ENCODE measurements at regions of chr6 and their contacts with region 1.

Region 1: GRCh38 chr6:2999618-3000557 is at the start of gene NQO2:
- DNase-seq: peak; percentile 82 to 94 (median 88)
- H3K4me3 ChIP-seq: peak within 1 kb of the TSS; percentile 95
- H3K4me3 Mint-ChIP-seq: peak within 1 kb of the TSS; percentile 89 to 94 (median 92)
- H3K27ac ChIP-seq: peak within 1 kb of the TSS; percentile 83
- H3K27ac Mint-ChIP-seq: peak within 1 kb of the TSS; percentile 80 to 96 (median 92)
- H3K4me1 ChIP-seq: peaks cover 19% of the 10 kb centered on the region
- H3K4me1 Mint-ChIP-seq: peaks cover 28 to 38% (median 35%) of the 10 kb centered on the region in 3 donors
- H3K27me3 ChIP-seq: no peaks in the 10 kb centered on the region
- H3K27me3 Mint-ChIP-seq: peaks cover 0 to 4% of the 10 kb centered on the region in 2 donors
- total RNA-seq, gene NQO2: 15.6 to 18.5 TPM

Region 2: DNA sequence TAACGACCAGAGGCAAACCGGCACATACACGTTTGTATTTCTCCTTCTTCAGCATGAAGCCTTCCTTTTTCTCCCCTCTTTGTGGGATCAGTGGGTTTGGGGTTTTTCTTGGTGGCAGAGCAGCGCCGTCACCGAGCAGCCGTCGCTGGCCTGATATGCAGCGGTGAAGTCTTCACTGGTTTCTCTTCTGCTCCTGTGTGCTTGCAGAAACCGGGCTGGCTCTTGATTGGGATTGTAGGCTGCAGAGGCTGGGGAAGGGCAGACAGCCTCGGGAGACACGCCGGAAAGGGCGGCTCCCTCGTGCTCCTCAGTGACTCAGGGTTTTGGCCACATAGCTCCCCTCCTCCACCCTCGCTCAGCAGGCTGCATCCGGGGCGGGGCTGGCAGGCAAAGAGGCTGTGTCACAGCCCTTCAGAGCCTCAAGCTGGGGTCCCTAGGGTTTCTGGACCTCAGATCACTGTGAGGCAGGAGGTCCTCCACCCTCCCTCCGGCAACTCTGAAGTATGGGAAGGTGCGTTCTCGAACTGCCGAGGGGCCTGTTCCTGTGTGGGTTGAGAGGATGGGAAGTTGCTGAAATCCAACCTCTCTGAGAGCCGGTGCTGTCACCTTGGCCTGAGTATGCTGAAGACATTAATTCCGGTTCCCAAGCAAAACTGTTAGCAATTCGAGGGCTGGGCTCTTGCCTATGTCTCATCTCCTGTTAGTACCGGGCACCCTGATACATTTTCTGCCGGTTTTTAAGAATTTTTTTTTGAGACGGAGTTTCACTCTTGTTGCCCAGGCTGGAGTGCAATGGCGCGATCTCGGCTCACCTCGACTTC is 24.0 kb after region 1 on chr6:
- CTCF ChIA-PET with region 1: interaction called, 13 read pairs
- POLR2A ChIA-PET with region 1: interaction called, 23 read pairs
- DNase-seq: peak; percentile 71 to 89 (median 77)
- H3K4me3 ChIP-seq: peak overlapping the region; percentile 88
- H3K4me3 Mint-ChIP-seq: peak overlapping the region; percentile 78 to 93 (median 90)
- H3K27ac ChIP-seq: peak overlapping the region; percentile 90
- H3K27ac Mint-ChIP-seq: peak overlapping the region; percentile 77 to 99 (median 93)
- H3K4me1 ChIP-seq: peaks cover 47% of the 10 kb centered on the region
- H3K4me1 Mint-ChIP-seq: peaks cover 47 to 65% (median 55%) of the 10 kb centered on the region in 3 donors
- H3K27me3 ChIP-seq: no peaks in the 10 kb centered on the region
- H3K27me3 Mint-ChIP-seq: peaks cover 0 to 1% of the 10 kb centered on the region in 2 donors

Region 3: GRCh38 chr6:3052481-3053230 is 52.8 kb after region 1 on chr6:
- CTCF ChIA-PET with region 1: interaction called, 73 read pairs
- POLR2A ChIA-PET with region 1: interaction called, 37 read pairs
- DNase-seq: no peak
- H3K4me3 ChIP-seq: peak overlapping the region; percentile 59
- H3K4me3 Mint-ChIP-seq: peak overlapping the region; percentile 60 to 92 (median 80)
- H3K27ac ChIP-seq: peak overlapping the region; percentile 69
- H3K27ac Mint-ChIP-seq: peak overlapping the region in 5 of 8 donors; percentile 13 to 86 (median 63)
- H3K4me1 ChIP-seq: peaks cover 7% of the 10 kb centered on the region
- H3K4me1 Mint-ChIP-seq: peaks cover 9 to 30% (median 10%) of the 10 kb centered on the region in 3 donors
- H3K27me3 ChIP-seq: no peaks in the 10 kb centered on the region
- H3K27me3 Mint-ChIP-seq: peaks cover 5 to 8% of the 10 kb centered on the region in 2 donors

Region 4: GRCh38 chr6:3081960-3082359 is 82.1 kb after region 1 on chr6:
- CTCF ChIA-PET with region 1: no interaction called
- POLR2A ChIA-PET with region 1: interaction called, 11 read pairs
- DNase-seq: no peak
- H3K4me3 ChIP-seq: no peak overlapping the region
- H3K4me3 Mint-ChIP-seq: no peak overlapping the region
- H3K27ac ChIP-seq: no peak overlapping the region
- H3K27ac Mint-ChIP-seq: no peak overlapping the region
- H3K4me1 ChIP-seq: no peaks in the 10 kb centered on the region
- H3K4me1 Mint-ChIP-seq: peaks cover 28 to 45% (median 32%) of the 10 kb centered on the region in 3 donors
- H3K27me3 ChIP-seq: no peaks in the 10 kb centered on the region
- H3K27me3 Mint-ChIP-seq: no peaks in the 10 kb centered on the region